ENCODE measurements at regions of chr11 and their contacts with region 1.

Region 1: GRCh38 chr11:94151903-94152677 is 23.4 kb downstream of the PANX1 start:
- DNase-seq: no peak

Region 2: DNA sequence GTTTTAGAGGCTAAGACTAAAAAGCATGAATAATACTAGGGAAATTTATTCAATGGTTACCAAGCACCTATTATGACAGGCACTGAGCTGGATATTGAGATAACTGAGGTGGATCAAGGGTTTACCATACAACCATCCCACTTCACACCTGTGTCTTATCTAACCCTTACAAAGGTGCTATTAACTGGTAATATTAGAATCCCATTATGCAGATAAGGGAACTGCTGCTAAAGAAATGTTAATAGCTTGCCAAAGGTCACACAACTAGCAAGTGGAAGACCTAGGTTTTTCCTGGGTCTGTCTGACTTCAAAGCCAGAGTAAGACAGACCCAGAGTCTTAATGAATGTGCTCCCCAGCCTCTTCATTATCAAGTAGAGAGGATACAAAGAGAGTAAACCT is 280.6 kb before region 1 on chr11:
- CTCF ChIA-PET with region 1: no interaction called
- POLR2A ChIA-PET with region 1: no interaction called
- DNase-seq: no peak

Region 3: GRCh38 chr11:94066901-94067429 is 85.1 kb before region 1 on chr11:
- CTCF ChIA-PET with region 1: no interaction called
- POLR2A ChIA-PET with region 1: no interaction called
- DNase-seq: no peak

Region 4: DNA sequence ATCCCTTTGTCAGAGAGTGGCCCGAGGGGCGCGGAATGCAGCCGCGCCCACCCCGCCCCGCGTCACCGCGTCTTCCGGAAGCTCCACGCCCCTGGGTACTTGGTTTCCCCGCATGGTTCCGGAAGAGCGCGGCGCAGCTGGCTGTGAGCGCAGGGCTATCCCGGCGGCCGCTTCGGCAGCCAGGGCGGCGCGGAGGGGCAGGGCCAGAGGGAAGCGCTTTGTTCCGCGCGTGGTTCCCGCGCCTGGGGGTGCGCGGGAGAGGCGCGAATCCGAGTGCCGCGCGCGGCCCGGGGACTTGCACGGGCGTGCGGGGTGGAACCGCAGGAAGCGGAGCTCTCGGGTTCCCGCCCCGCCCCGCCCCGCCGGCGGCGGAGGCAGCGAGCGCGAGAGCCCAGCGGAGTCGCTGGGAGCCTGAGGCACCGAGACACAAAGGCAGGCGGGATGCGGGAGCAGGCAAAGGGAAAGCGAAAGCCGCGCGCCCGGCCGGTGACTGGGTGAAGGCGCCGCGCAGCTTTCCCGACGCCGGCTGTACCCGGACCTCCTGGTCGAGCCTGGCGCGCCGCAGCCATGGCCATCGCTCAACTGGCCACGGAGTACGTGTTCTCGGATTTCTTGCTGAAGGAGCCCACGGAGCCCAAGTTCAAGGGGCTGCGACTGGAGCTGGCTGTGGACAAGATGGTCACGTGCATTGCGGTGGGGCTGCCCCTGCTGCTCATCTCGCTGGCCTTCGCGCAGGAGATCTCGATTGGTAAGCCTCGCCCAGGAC is 23.2 kb before region 1 on chr11 and contains the start of gene PANX1:
- CTCF ChIA-PET with region 1: interaction called, 6 read pairs
- POLR2A ChIA-PET with region 1: interaction called, 19 read pairs
- DNase-seq: peak; percentile 78